Ovary (tissue), 10 donors: ENCODE measurements at regions of chr3 and their contacts with region 1.

Region 1: DNA sequence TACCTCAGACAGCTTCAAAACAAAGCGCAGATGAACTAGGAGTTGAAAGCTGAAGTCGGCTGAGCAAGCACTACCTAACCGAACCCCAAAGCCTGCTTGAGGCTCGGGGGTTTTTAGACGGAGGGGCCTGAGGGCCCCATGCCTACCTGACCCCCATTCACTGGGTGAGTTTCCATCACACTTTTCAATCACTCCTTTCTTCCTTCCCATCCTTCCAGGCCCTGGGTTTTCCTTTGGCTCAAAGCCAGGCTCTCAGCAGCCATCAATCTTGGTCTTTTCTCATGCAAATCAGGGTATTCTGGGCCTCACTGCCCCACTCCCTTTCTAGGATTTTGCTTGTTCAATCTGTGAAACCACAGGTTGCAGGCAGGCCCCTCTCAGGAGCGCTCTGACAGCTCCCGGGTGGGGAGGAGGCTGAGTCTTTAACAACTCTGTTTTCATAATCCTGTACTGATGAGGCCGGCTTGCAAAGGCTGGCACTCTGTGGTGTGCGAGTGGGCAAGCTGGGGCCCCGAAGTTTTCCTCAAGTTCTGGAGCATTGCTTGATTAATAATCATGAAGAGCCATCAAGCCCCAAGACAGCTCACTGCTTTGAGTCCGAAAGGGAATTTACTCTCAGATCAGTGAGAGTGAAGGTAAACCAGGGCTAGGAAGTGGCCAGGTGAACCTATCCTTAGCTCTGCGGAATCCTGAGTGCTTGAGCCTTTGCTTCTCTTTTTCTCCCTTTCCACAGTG is 97.6 kb downstream of the FRMD4B start:
- DNase-seq: no peak
- H3K4me3 ChIP-seq: no peak overlapping the region
- H3K27ac ChIP-seq: no peak overlapping the region
- H3K4me1 ChIP-seq: no peaks in the 10 kb centered on the region
- H3K27me3 ChIP-seq: no peaks in the 10 kb centered on the region
- CTCF ChIP-seq: no peak
- EP300 ChIP-seq: no peak
- POLR2A ChIP-seq: no peak

Region 2: DNA sequence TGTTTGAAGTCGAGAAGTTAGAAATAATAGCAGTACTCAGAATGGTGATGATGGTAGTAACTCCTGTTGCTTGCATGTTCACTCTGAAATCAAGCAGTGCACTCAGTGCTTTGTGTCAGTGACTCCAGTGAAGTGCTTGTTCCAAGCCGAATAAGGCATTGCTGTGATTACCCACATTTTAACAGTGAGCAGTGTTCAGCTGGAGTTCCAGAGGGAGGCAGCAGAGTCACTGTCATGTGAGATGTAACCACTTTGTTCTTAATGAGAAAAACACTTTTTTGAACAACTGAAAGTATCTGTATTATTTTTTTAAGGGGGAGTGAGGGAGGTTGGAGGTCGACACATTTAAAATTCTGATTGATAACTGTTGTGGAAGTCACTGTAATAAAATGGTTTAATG is 1020.4 kb after region 1 on chr3:
- intact Hi-C with region 1: loop called in 1 of 4 experiments (anchors 5 kb)
- DNase-seq: no peak
- H3K4me3 ChIP-seq: no peak overlapping the region
- H3K27ac ChIP-seq: no peak overlapping the region
- H3K4me1 ChIP-seq: no peaks in the 10 kb centered on the region
- H3K27me3 ChIP-seq: no peaks in the 10 kb centered on the region
- CTCF ChIP-seq: no peak
- EP300 ChIP-seq: no peak
- POLR2A ChIP-seq: no peak